ENCODE measurements at regions of chr18 and their contacts with region 1.

Region 1: DNA sequence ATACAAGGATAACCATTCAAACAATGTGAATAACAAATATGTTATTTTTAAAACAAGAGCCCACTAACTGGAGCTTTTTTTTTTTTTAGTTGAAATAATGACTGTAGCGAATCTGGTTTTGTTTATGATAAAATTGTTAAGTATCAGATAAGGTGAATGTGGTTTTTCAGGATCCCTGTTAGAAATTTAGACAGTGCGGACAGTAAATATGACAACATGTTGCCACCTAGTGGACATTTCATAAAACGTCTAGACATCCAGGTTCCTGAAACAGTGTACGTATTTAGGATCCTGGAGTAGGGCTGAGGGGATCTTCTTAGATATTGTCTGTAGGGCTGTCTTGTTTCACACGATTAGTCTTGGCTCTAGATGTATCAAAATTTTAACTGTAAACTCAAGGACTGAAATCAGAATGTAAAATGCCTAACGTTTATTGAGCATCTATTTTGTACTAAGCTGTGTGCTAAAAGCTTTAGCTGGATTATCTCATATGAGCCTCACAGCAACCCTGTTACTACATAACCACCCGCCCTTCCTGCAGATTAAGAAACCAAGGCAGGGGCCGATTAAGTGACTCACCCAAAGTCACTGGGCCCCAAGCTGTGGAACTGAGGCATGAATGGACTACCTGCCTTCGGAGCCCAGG is 23.9 kb upstream of the CCDC68 start:
- DNase-seq: peak in 1 of 2 experiments; percentile 11
- H3K4me3 ChIP-seq: no peak overlapping the region
- H3K4me3 Mint-ChIP-seq: no peak overlapping the region
- H3K27ac Mint-ChIP-seq: no peak overlapping the region
- H3K4me1 ChIP-seq: no peaks in the 10 kb centered on the region
- H3K4me1 Mint-ChIP-seq: no peaks in the 10 kb centered on the region
- H3K27me3 ChIP-seq: no peaks in the 10 kb centered on the region
- H3K27me3 Mint-ChIP-seq: no peaks in the 10 kb centered on the region
- CTCF ChIP-seq: peak; percentile 26 to 36

Region 2: GRCh38 chr18:54679318-54680149 is 303.6 kb before region 1 on chr18:
- CTCF ChIA-PET with region 1: no interaction called
- POLR2A ChIA-PET with region 1: no interaction called
- intact Hi-C with region 1: loop called (anchors 1 kb)
- DNase-seq: peak in 1 of 2 experiments; percentile 6
- H3K4me3 ChIP-seq: no peak overlapping the region
- H3K4me3 Mint-ChIP-seq: no peak overlapping the region
- H3K27ac Mint-ChIP-seq: no peak overlapping the region
- H3K4me1 ChIP-seq: no peaks in the 10 kb centered on the region
- H3K4me1 Mint-ChIP-seq: no peaks in the 10 kb centered on the region
- H3K27me3 ChIP-seq: no peaks in the 10 kb centered on the region
- H3K27me3 Mint-ChIP-seq: no peaks in the 10 kb centered on the region
- CTCF ChIP-seq: peak; percentile 20 to 30

Region 3: DNA sequence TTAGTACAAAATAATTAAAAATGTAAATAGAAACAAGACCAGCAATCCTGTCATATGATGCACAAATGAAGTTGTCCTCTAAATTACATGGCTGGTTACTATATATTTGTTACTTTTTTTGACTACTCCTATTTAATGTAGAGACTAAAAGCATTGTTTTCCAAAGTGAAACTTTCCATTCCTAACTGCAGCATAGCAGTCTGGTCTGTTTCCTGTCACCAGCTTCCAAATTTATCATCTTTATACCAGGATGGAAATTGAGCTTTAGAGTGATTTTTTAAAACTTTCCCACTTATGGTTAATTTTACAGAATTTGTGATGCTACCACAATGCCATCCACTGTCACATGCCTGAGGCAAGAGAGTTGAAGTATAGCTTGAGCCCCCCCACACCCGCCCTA is 188.3 kb before region 1 on chr18:
- CTCF ChIA-PET with region 1: no interaction called
- POLR2A ChIA-PET with region 1: no interaction called
- intact Hi-C with region 1: no loop called
- DNase-seq: no peak
- H3K4me3 ChIP-seq: no peak overlapping the region
- H3K4me3 Mint-ChIP-seq: no peak overlapping the region
- H3K27ac Mint-ChIP-seq: no peak overlapping the region
- H3K4me1 ChIP-seq: no peaks in the 10 kb centered on the region
- H3K4me1 Mint-ChIP-seq: no peaks in the 10 kb centered on the region
- H3K27me3 ChIP-seq: no peaks in the 10 kb centered on the region
- H3K27me3 Mint-ChIP-seq: no peaks in the 10 kb centered on the region
- CTCF ChIP-seq: no peak

Region 4: GRCh38 chr18:54916507-54916906 is 66.7 kb before region 1 on chr18:
- CTCF ChIA-PET with region 1: no interaction called
- POLR2A ChIA-PET with region 1: no interaction called
- intact Hi-C with region 1: loop called (anchors 5 kb)
- DNase-seq: no peak
- H3K4me3 ChIP-seq: no peak overlapping the region
- H3K4me3 Mint-ChIP-seq: no peak overlapping the region
- H3K27ac Mint-ChIP-seq: peak overlapping the region; percentile 35
- H3K4me1 ChIP-seq: no peaks in the 10 kb centered on the region
- H3K4me1 Mint-ChIP-seq: no peaks in the 10 kb centered on the region
- H3K27me3 ChIP-seq: no peaks in the 10 kb centered on the region
- H3K27me3 Mint-ChIP-seq: no peaks in the 10 kb centered on the region
- CTCF ChIP-seq: no peak

Region 5: DNA sequence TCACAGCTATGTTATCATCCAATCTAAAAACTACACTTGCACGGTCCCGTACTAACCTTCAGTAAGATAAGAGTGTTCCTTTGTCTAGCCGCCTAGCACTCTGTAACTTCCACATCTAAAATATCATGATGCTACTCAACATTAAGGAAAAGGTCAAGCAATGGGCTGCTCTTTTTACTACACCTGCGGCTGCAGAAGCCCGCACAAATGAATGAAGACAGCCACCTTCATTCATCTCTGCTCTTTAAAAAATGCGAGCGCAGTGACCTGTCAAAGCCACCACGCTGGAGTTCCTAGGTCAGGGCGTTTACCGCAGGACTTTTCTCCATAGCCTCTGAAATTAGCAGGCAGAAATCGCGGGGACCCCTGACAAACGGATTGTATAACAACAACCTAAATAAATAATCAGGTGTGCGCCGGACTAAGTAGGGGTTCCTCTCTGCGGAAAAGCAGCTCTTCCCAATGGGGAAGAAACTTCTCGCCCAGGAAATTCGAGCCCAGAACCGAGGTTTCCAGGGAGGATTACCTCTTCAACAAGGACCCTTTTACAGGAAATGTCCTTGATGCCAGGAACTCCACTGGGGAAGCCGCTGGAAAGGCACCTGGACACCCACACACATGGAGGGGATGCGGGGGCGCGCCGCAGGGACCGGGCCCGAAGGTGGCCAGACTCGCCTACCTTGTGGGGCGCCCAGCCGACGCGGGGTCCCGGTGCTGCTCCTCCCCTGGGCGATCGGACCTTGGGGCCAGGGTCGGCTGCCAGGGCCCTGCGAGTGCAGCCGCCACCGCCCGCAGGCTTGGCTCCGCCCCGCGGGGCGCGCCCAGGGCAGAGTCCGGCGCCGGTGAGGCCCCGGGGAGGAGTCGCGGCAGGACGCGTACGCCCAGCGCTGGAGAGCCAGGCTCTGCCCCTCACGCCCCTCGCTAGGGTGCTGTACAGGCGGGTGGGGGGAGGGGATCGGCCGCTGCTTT is 24.2 kb before region 1 on chr18 and contains the start of gene CCDC68:
- CTCF ChIA-PET with region 1: no interaction called
- POLR2A ChIA-PET with region 1: no interaction called
- intact Hi-C with region 1: loop called (anchors 1 kb)
- DNase-seq: peak; percentile 80 to 85
- H3K4me3 ChIP-seq: peak within 1 kb of the TSS; percentile 63
- H3K4me3 Mint-ChIP-seq: peak within 1 kb of the TSS; percentile 90
- H3K27ac Mint-ChIP-seq: peak within 1 kb of the TSS; percentile 81
- H3K4me1 ChIP-seq: peaks cover 8% of the 10 kb centered on the region; the same call in 1 of the 2 replicates
- H3K4me1 Mint-ChIP-seq: peaks cover 14% of the 10 kb centered on the region
- H3K27me3 ChIP-seq: no peaks in the 10 kb centered on the region
- H3K27me3 Mint-ChIP-seq: no peaks in the 10 kb centered on the region
- CTCF ChIP-seq: no peak
- total RNA-seq, gene CCDC68: 6.9 and 7.6 TPM in 2 replicates

Region 6: GRCh38 chr18:55220523-55220922 is 237.4 kb after region 1 on chr18:
- CTCF ChIA-PET with region 1: no interaction called
- POLR2A ChIA-PET with region 1: no interaction called
- intact Hi-C with region 1: no loop called
- DNase-seq: no peak
- H3K4me3 ChIP-seq: no peak overlapping the region
- H3K4me3 Mint-ChIP-seq: no peak overlapping the region
- H3K27ac Mint-ChIP-seq: no peak overlapping the region
- H3K4me1 ChIP-seq: no peaks in the 10 kb centered on the region
- H3K4me1 Mint-ChIP-seq: no peaks in the 10 kb centered on the region
- H3K27me3 ChIP-seq: no peaks in the 10 kb centered on the region
- H3K27me3 Mint-ChIP-seq: no peaks in the 10 kb centered on the region
- CTCF ChIP-seq: no peak

Measured in Caco-2 (cell line).